Body of pancreas (tissue), 4 donors: ENCODE measurements at regions of chr1 and their contacts with region 1.

Region 1: GRCh38 chr1:1225238-1225845 is 6.5 kb downstream of the SDF4 start:
- DNase-seq: no peak
- ATAC-seq: no peak
- H3K4me3 ChIP-seq: no peak overlapping the region
- H3K27ac ChIP-seq: no peak overlapping the region
- H3K4me1 ChIP-seq: peaks cover 12% of the 10 kb centered on the region
- H3K27me3 ChIP-seq: no peaks in the 10 kb centered on the region
- CTCF ChIP-seq: no peak
- POLR2A ChIP-seq: no peak

Region 2: GRCh38 chr1:1115786-1116700 is 109.3 kb before region 1 on chr1 and contains the start of gene C1orf159:
- intact Hi-C with region 1: loop called (anchors 5 kb)
- DNase-seq: peak; percentile 99
- ATAC-seq: peak; percentile 99
- H3K4me3 ChIP-seq: peak within 1 kb of the TSS; percentile 54 to 76
- H3K27ac ChIP-seq: peak within 1 kb of the TSS; percentile 42 to 76 (median 68)
- H3K4me1 ChIP-seq: peaks cover 10% of the 10 kb centered on the region
- H3K27me3 ChIP-seq: no peaks in the 10 kb centered on the region
- CTCF ChIP-seq: peak in 2 of 7 experiments; percentile 33 to 37
- POLR2A ChIP-seq: peak in 2 of 3 donors; percentile 32 to 36
- total RNA-seq, gene C1orf159: 8.8 to 13.2 TPM

Region 3: GRCh38 chr1:1387098-1388077 is 162.0 kb after region 1 on chr1:
- intact Hi-C with region 1: no loop called
- DNase-seq: no peak
- ATAC-seq: no peak
- H3K4me3 ChIP-seq: no peak overlapping the region
- H3K27ac ChIP-seq: no peak overlapping the region
- H3K4me1 ChIP-seq: no peaks in the 10 kb centered on the region
- H3K27me3 ChIP-seq: no peaks in the 10 kb centered on the region
- CTCF ChIP-seq: no peak
- POLR2A ChIP-seq: no peak